ENCODE measurements at regions of chr11 and their contacts with region 1.

Region 1: DNA sequence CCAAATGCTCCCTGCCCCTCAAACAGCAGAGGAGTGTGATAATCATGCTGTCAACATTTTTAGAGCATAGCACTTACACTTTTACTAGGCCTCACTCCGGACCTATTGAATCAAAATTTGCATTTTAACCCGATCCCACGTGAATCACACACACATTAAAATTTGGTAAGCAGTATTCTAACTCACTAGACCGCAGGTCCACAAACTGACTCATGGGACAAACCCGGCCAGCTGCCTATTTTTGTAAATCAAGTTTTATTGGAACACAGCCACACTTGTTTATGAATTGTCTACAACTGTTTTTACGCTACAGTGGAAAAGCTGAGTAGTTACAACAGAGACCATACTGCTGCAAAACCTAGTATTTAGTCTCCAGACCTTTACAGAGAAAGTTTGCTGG is 43.3 kb downstream of the SNX19 start:
- DNase-seq: no peak
- H3K4me3 ChIP-seq: no peak overlapping the region
- H3K4me3 Mint-ChIP-seq: no peak overlapping the region
- H3K27ac ChIP-seq: no peak overlapping the region
- H3K27ac Mint-ChIP-seq: peak overlapping the region in 2 of 8 donors; percentile 24 to 61
- H3K4me1 ChIP-seq: no peaks in the 10 kb centered on the region
- H3K4me1 Mint-ChIP-seq: no peaks in the 10 kb centered on the region
- H3K27me3 ChIP-seq: no peaks in the 10 kb centered on the region
- H3K27me3 Mint-ChIP-seq: no peaks in the 10 kb centered on the region

Region 2: DNA sequence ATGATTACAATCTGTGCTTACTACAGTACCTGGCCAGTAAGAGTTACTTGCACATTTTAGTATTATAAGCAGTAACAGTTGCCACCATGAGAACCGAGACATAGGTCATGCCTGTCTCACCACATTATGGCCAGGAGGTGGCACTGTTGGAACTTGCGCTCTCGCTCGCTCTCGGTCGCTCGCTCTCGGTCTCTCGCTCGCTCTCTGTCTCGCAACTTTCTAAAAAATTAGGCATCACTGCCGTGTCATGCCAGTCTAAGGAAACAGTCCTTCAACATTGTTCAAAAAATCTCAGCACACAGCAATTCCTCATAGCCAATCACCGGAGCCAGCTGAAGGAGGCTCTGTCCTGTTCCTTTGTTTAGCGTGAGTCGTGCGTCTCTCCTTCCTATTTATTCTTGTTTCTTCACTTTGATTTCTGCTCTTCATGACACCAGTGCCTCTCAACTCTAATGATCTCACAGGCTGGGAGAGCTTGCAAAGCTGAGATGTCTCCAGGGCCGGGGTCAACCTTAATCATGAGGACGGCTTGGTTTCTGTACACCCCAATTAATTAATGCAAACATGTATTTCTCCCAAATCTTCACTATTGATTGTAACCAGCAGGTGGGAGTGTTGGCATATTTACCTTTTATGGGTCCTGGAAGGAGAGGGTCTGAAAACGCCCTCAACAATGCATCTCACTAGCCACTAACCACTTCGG is 438.3 kb before region 1 on chr11:
- CTCF ChIA-PET with region 1: interaction called, 10 read pairs
- POLR2A ChIA-PET with region 1: no interaction called
- DNase-seq: peak; percentile 43 to 68 (median 58)
- H3K4me3 ChIP-seq: peak overlapping the region; percentile 77
- H3K4me3 Mint-ChIP-seq: no peak overlapping the region
- H3K27ac ChIP-seq: no peak overlapping the region
- H3K27ac Mint-ChIP-seq: no peak overlapping the region
- H3K4me1 ChIP-seq: peaks cover 9% of the 10 kb centered on the region
- H3K4me1 Mint-ChIP-seq: peaks cover 15 to 19% (median 15%) of the 10 kb centered on the region in 3 donors
- H3K27me3 ChIP-seq: peaks cover 8% of the 10 kb centered on the region
- H3K27me3 Mint-ChIP-seq: peaks cover 13 to 20% of the 10 kb centered on the region in 2 donors

Region 3: DNA sequence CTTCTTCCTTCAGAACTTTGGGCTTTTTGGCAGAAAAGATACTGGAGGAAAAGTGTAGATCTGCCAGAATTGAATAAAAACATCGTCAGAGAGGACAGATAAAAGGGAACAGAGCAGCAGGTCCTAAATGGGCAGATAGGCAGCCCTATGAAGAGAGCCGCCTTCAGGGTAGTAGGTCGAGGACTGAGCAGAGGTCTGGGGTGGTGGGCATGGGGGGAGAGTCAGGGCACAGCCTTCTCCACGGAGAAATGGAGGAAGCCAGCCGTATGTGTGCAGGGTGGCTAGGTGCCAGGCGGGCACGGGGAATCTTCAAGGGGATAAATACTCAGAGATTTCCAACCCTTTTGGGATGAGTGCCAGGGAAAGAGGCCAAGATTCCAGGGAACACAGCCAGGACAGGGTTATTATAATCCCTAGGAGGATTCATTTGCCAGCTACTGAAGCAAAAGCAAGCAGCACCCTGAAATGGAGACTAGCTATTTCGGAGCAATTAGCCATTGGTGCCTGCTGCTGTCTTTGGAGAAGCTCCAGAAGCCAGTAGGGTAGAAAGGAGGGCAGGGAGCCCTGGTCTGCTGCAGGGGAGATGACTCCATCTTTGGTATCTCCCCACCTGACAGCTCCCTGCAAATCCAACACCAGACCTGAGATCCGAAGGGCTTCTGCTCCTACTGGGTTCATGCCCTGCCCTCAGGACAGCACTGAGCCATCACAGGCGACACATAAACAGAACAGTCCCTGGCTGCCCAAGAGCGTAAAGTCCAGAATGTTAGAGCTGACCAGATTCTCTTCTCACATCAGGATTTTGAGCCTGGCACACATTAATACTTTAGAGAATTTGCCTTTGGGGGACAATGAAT is 322.9 kb after region 1 on chr11:
- CTCF ChIA-PET with region 1: no interaction called
- POLR2A ChIA-PET with region 1: no interaction called
- DNase-seq: no peak
- H3K4me3 ChIP-seq: no peak overlapping the region
- H3K4me3 Mint-ChIP-seq: no peak overlapping the region
- H3K27ac ChIP-seq: no peak overlapping the region
- H3K27ac Mint-ChIP-seq: no peak overlapping the region
- H3K4me1 ChIP-seq: no peaks in the 10 kb centered on the region
- H3K4me1 Mint-ChIP-seq: no peaks in the 10 kb centered on the region
- H3K27me3 ChIP-seq: no peaks in the 10 kb centered on the region
- H3K27me3 Mint-ChIP-seq: no peaks in the 10 kb centered on the region